ENCODE measurements at regions of chr7 and their contacts with region 1.

Region 1: DNA sequence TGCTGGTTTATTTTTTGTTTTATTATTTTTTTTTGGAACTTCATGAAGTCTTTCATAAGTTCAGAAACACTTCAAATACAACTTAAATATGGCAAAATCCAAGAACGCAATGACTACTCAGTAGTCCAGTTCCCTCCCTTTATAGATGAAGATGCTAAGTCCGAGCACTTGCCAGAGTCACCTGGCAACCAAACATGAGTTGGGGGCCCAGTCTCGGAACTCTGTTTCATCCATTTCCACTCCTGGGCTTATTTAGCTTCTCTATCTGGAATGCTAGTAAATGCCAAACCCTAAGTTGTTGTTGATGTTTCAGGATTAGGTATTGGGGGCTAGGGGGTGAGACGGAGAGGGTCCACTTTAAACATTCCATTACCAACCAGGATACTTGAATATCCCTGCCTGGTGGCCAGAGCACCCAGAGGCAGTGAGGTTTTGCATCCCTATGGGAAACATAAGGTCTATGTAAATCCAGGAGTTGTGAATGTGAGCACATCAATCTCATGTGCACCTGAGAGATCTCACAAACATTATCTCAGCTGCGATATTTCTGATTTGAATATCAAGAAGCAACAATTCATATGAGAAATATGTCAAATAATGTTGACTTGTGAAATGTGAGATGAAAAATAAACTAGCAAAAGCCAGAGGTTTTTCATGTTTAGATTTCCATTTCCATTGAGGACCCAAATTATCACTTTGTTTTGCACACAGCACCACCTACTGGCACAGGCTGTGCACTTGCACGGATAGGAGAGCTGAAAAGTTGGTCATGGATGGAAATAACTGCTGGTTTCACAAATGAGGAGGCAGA is 129.3 kb downstream of the PKD1L1 start:
- DNase-seq: peak; percentile 68 to 93
- H3K4me3 ChIP-seq: no peak overlapping the region
- CTCF ChIP-seq: peak in 2 of 3 donors; percentile 38 to 76
- POLR2A ChIP-seq: no peak

Region 2: DNA sequence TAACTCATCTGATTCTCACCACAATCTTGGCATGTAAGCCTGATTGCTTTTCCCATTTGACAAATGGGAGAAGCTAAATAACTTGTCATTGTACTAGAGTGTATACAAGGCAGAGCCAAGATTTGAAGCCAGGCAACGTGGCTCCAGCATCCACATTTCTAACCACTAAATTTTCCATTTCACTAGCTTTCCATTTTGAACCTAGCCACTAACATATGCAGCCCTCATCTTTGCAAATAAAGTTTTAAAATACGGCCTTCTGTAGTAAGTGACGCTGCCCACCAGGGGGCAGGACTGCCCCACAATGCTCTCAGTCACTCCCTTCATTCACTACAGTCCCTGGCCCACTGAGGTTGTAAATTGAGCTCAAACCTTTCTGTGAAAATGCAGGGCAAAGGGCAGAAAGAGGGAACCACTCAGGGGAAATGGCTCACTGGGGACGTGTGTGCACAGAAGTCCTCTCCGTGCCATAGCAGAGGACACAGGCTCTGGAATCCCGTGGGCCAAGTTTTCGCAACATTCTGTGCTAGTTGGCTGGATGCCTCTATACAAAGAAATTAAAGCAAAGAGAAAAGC is 552.8 kb before region 1 on chr7:
- intact Hi-C with region 1: loop called (anchors 5 kb)
- DNase-seq: peak; percentile 47 to 88
- H3K4me3 ChIP-seq: no peak overlapping the region
- CTCF ChIP-seq: peak in 1 of 3 donors; percentile 76
- POLR2A ChIP-seq: no peak

Region 3: DNA sequence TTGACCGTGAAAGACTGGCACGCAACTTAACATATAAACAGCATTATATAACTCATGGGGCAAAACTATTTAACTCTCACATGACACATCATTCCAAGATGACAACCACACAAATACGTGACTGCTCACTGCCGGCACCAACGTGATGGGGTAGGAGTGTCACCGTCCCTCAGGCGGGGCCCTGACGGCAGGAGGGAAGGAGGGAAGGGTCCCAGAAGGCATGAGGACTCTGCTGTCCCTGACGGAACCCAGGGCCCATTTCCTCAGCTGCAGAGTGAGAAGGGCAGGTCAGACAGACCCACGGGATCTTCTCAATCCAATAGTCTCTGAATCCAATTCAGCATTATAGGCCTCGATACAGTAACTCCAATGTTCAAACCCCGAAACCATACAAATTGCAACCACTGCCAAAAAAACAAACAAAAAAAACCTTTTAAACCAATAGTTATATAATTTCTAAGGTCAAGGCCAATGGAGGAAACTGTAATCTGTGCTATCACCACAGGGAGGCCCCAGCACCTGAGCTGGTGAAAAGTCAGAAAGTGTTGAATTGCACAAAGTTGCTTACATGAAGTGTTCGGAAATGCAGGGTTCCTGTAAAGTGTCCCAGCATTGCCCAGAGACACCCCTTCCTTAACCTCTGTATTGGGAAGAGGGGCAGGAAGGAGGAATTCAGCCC is 374.5 kb before region 1 on chr7:
- intact Hi-C with region 1: loop called (anchors 10 kb)
- DNase-seq: no peak
- H3K4me3 ChIP-seq: no peak overlapping the region
- CTCF ChIP-seq: no peak
- POLR2A ChIP-seq: no peak